Adrenal gland (tissue), 19 donors: ENCODE measurements at regions of chr10 and their contacts with region 1.

Region 1: GRCh38 chr10:3248888-3249758 is 76.5 kb upstream of the PITRM1 start:
- DNase-seq: no peak
- H3K4me3 ChIP-seq: no peak overlapping the region
- H3K27ac ChIP-seq: peak overlapping the region in 2 of 5 donors; percentile 23 to 50
- H3K4me1 ChIP-seq: no peaks in the 10 kb centered on the region
- H3K27me3 ChIP-seq: no peaks in the 10 kb centered on the region
- CTCF ChIP-seq: no peak
- POLR2A ChIP-seq: no peak

Region 2: DNA sequence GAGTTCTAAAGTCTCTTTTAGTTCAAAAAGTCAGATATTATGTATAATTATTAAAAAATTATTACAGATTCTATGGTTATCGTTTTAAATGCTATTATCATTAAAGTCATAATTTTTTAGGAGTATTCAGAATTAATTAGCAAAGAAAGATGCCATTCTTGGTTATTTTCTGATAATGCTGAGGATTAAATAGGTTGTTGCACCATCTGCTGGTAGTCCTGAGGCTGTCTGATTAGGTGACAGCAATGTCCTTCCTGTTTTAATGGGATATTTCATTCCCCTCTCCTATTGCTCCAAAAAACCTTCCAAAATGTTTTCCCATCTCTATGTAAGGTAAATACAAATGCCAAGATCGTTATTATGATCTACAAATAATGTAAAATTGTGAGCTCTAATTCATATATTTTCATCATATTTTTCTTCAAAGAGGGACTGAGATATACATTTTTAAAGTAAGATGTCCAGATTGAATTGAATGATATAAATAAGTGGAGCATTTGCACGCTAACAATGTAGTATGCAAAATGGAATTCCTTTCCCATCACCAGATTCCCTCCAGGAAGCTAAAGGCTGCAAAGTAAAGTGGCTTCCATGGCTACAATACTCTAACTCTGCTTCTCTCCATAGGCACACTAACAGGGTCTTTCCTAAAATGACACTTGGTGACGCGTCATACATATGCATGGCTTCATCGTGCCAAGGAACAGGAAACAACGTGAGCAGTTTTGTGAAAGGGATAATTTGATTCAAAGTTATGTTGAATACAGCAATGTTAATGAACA is 1518.1 kb after region 1 on chr10:
- intact Hi-C with region 1: loop called in 1 of 2 experiments (anchors 10 kb)
- DNase-seq: no peak
- H3K4me3 ChIP-seq: no peak overlapping the region
- H3K27ac ChIP-seq: no peak overlapping the region
- H3K4me1 ChIP-seq: peaks cover 0 to 5% of the 10 kb centered on the region in 2 donors
- H3K27me3 ChIP-seq: no peaks in the 10 kb centered on the region
- CTCF ChIP-seq: peak; percentile 18 to 62 (median 44)
- POLR2A ChIP-seq: no peak